ENCODE measurements at regions of chr3 and their contacts with region 1.

Region 1: DNA sequence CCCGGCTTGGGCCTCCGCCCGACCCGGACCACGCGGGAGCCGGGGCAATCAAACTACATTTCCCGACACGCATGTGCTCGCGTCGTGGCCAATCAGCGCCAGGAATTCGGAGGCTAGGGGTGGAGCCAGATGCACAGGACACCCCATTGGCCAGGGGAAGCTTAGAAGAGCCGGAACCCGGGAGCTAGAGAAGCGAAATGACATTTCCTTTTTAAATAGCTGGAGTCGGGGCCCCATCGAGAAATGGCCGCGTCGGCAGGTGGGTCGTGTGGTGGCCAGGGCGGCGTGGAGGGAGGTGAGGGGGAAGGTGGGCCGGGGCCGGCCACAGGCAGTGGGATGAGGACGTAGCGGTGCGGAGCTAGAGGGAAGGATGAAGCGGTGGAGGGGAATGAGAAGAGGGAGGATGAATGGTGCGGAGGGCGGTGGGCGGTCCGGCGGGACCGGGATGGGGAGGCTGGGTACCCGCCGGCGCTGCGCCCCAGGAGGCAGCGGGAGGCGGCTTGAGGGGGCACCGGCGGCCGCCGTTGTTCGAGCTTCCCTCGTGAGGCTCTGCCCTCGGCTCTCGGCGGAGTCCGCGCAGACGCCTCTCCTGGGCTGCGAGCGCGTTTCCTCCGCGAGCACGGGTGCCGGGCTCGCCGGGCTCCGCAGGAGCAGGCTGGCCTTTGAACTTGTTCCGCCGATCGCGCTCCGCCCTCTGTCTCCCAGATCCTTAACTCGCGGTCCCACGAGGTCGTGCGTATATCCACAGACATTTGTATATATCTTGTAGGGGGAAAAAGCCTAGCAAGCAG is at the start of gene KBTBD8:
- DNase-seq: peak; percentile 98
- H3K4me3 Mint-ChIP-seq: peak within 1 kb of the TSS; percentile 95
- H3K27ac Mint-ChIP-seq: peak within 1 kb of the TSS; percentile 86
- H3K4me1 Mint-ChIP-seq: peaks cover 27% of the 10 kb centered on the region
- H3K27me3 Mint-ChIP-seq: peaks cover 14% of the 10 kb centered on the region
- total RNA-seq, gene KBTBD8: 10.4 and 13.4 TPM in 2 replicates

Region 2: GRCh38 chr3:66500576-66501482 is 497.5 kb before region 1 on chr3 and contains the start of gene LRIG1:
- intact Hi-C with region 1: loop called (anchors 10 kb)
- DNase-seq: peak; percentile 98
- H3K4me3 Mint-ChIP-seq: peak within 1 kb of the TSS; percentile 96
- H3K27ac Mint-ChIP-seq: peak within 1 kb of the TSS; percentile 84
- H3K4me1 Mint-ChIP-seq: peaks cover 59% of the 10 kb centered on the region
- H3K27me3 Mint-ChIP-seq: peaks cover 27% of the 10 kb centered on the region
- total RNA-seq, gene LRIG1: 42.5 and 47.9 TPM in 2 replicates

Region 3: GRCh38 chr3:66957367-66957766 is 40.9 kb before region 1 on chr3:
- intact Hi-C with region 1: no loop called
- DNase-seq: no peak
- H3K4me3 Mint-ChIP-seq: no peak overlapping the region
- H3K27ac Mint-ChIP-seq: no peak overlapping the region
- H3K4me1 Mint-ChIP-seq: no peaks in the 10 kb centered on the region
- H3K27me3 Mint-ChIP-seq: peaks cover 18% of the 10 kb centered on the region

Region 4: DNA sequence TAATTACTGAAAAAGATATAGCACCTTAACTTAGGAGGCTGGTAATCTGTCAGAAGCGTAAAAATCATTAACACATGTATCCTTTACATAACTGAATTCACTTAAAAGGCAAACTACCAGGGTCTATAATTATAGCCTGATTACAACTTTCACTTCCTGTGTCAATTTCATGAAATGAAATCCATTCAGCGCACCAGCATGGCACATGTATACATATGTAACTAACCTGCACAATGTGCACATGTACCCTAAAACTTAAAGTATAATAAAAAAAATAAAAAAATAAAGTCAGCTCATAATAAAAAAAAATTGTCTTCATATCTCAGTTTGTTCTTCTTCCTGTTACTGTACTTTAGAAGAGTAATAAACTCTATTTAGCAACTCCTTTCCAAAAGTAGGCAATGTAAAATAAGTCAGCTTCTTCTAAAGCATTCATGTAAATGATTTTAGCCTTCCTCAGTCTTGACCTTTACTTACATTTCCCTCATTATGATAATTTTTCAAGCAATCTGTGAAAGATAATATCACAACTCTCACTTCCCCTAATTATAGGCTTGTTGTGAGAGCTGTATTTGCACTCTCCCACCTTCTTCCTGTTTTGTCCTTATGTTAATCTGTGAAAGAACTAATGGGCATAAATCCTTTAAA is 49.9 kb after region 1 on chr3:
- intact Hi-C with region 1: no loop called
- DNase-seq: no peak
- H3K4me3 Mint-ChIP-seq: no peak overlapping the region
- H3K27ac Mint-ChIP-seq: no peak overlapping the region
- H3K4me1 Mint-ChIP-seq: no peaks in the 10 kb centered on the region
- H3K27me3 Mint-ChIP-seq: peaks cover 8% of the 10 kb centered on the region

Region 5: DNA sequence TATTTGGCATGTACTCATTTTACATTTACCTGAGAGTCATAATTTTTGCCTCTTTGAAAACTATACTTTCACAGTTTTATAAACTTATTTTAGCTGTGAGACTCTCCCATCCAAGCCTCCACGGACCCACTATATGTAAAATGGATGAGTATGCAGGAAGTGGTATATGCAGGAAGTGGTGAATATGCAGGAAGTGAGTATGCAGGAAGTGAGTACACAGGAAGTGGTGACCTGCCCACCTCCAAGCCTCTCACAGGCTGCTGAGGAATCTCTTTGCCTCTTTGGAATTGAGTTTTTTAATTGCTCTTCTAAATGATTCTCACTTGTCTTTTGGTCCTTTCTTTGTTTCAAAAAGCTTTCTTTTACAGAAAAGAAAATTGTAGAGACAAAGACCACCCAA is 85.0 kb after region 1 on chr3:
- intact Hi-C with region 1: loop called (anchors 1 kb)
- DNase-seq: peak; percentile 28
- H3K4me3 Mint-ChIP-seq: no peak overlapping the region
- H3K27ac Mint-ChIP-seq: peak overlapping the region; percentile 55
- H3K4me1 Mint-ChIP-seq: peaks cover 20% of the 10 kb centered on the region
- H3K27me3 Mint-ChIP-seq: peaks cover 3% of the 10 kb centered on the region

Region 6: DNA sequence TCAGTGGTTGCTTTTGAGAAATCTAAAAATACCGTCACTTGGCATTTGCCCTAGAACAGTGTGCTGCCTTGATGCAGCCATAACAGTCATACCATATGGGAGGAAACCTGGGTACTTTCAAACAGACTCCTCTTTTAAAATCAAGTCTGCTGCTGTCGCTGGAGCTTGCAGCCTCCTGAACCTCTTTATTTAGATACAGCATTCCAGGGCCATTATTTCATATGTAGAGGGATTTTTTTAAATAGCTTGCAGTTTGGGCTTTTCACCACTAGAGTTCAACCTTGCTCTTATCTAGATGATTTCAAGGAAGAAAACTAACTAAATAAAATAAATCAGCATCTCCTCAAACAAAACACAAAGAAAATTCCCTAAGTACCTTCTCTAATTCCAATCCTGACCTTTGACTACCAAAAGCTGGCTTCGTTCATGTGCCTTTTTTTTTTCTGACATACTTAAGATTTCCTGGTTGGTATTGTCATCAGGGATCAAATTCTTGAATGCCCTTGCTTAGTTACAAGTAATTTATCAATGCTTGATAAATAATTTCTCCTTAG is 111.4 kb after region 1 on chr3:
- intact Hi-C with region 1: no loop called
- DNase-seq: no peak
- H3K4me3 Mint-ChIP-seq: no peak overlapping the region
- H3K27ac Mint-ChIP-seq: no peak overlapping the region
- H3K4me1 Mint-ChIP-seq: peaks cover 5% of the 10 kb centered on the region
- H3K27me3 Mint-ChIP-seq: peaks cover 2% of the 10 kb centered on the region

Region 7: GRCh38 chr3:67349551-67350174 is 351.4 kb after region 1 on chr3:
- intact Hi-C with region 1: loop called (anchors 5 kb)
- DNase-seq: no peak
- H3K4me3 Mint-ChIP-seq: no peak overlapping the region
- H3K27ac Mint-ChIP-seq: peak overlapping the region; percentile 29
- H3K4me1 Mint-ChIP-seq: peaks cover 10% of the 10 kb centered on the region
- H3K27me3 Mint-ChIP-seq: peaks cover 9% of the 10 kb centered on the region